CD8-positive, alpha-beta memory T cell (primary cell): ENCODE measurements at regions of chr17 and their contacts with region 1.

Region 1: GRCh38 chr17:75261336-75262111 is at the starts of genes GGA3 and MRPS7:
- DNase-seq: peak; percentile 93 to 97 (median 97)
- H3K4me3 ChIP-seq: peak within 1 kb of the TSS; percentile 94
- H3K4me3 Mint-ChIP-seq: peak within 1 kb of the TSS; percentile 92 to 98 (median 95)
- H3K27ac ChIP-seq: peak within 1 kb of the TSS; percentile 99
- H3K27ac Mint-ChIP-seq: peak within 1 kb of the TSS; percentile 99 to 100 (median 100)
- H3K4me1 ChIP-seq: peaks cover 29% of the 10 kb centered on the region
- H3K4me1 Mint-ChIP-seq: peaks cover 48 to 68% (median 52%) of the 10 kb centered on the region in 3 donors
- H3K27me3 ChIP-seq: no peaks in the 10 kb centered on the region
- H3K27me3 Mint-ChIP-seq: peaks cover 0 to 3% of the 10 kb centered on the region in 2 donors
- total RNA-seq, gene GGA3: 73.2 to 75.1 TPM
- total RNA-seq, gene MRPS7: 101 to 102 TPM

Region 2: DNA sequence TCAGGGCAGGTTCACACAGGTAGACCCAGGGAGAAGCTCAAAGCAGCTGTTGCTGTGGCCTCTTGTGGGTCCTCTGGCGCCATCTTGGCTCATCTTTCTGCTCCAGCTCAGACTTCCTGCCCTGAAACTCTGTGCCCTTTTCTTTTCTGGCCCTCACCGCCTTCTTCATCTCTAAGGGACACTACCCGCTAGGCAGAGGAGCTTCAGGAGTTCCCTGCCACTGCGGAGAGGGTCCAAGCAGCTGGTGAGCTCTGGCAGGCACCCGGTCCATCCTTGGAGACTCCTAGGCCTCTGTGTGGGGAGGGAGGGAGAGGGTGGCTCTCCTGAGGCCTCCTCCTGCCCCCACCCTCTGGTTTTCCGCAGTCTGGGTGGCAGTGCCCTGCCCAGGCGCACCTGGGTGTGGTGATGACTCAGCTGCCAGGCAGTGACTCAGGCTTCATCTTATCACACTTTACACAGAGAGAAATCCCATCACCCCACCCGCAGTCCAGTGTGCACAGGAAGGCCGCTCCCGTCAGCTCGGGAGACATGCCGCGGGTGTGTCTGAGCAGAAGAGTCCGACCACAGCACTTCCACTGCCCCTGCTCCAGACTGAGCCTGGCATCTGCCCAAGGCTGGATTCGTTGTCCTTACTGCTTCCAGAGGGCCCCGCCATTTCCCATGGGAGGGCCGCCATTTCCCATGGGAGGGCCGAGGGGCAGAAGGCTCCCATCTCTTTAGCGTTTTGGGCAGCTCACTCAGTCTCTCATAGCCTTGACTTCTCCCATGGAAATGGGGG is 137.3 kb before region 1 on chr17:
- CTCF ChIA-PET with region 1: no interaction called
- POLR2A ChIA-PET with region 1: no interaction called
- DNase-seq: peak in 2 of 5 donors; percentile 8 to 59
- H3K4me3 ChIP-seq: no peak overlapping the region
- H3K4me3 Mint-ChIP-seq: no peak overlapping the region
- H3K27ac ChIP-seq: peak overlapping the region; percentile 64
- H3K27ac Mint-ChIP-seq: peak overlapping the region in 5 of 8 donors; percentile 11 to 90 (median 39)
- H3K4me1 ChIP-seq: peaks cover 25% of the 10 kb centered on the region
- H3K4me1 Mint-ChIP-seq: peaks cover 23 to 30% (median 28%) of the 10 kb centered on the region in 3 donors
- H3K27me3 ChIP-seq: no peaks in the 10 kb centered on the region
- H3K27me3 Mint-ChIP-seq: no peaks in the 10 kb centered on the region

Region 3: DNA sequence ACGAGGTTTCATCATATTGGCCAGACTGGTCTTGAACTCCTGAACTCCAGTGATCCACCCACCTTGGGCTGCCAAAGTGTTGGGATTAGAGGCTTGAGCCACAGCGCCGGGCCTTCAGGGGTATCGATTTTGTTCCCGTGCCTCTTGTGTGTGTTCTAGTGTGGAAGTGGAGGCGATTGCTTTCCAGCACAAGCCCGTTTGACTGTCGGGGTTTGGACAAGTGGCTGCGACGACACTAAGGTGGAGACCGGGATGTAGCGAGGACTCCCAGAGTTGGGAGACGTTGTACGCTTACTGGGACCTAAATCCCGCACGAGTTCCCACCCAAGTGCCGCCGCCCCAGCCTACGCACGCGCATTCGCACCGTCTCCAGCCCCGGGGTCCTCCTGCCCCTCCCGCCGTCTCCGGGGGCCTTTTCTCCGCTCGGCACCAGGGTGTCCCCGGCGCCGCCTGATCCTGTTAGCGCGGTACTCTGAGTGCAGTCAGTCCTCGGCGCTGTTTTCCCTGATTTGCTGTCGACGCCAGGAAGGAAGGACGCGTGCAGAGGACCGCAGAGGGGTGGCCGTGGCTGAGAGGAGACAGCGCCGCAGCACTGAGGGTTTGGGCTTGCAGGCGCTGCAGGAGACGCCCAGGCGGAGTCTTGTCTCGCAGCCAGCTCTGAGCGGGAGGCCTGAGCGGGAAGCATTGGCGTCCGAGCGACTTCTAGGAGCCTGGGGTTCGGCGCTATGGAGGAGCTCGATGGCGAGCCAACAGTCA is 56.3 kb before region 1 on chr17 and contains the start of gene NUP85:
- CTCF ChIA-PET with region 1: interaction called, 6 read pairs
- POLR2A ChIA-PET with region 1: interaction called, 10 read pairs
- DNase-seq: peak; percentile 88 to 94 (median 91)
- H3K4me3 ChIP-seq: peak within 1 kb of the TSS; percentile 92
- H3K4me3 Mint-ChIP-seq: peak within 1 kb of the TSS; percentile 94 to 98 (median 96)
- H3K27ac ChIP-seq: peak within 1 kb of the TSS; percentile 91
- H3K27ac Mint-ChIP-seq: peak within 1 kb of the TSS; percentile 93 to 99 (median 98)
- H3K4me1 ChIP-seq: peaks cover 8% of the 10 kb centered on the region
- H3K4me1 Mint-ChIP-seq: peaks cover 31 to 42% (median 39%) of the 10 kb centered on the region in 3 donors
- H3K27me3 ChIP-seq: no peaks in the 10 kb centered on the region
- H3K27me3 Mint-ChIP-seq: no peaks in the 10 kb centered on the region
- total RNA-seq, gene NUP85: 147 to 152 TPM

Region 4: GRCh38 chr17:75301502-75302206 is 40.1 kb after region 1 on chr17:
- CTCF ChIA-PET with region 1: no interaction called
- POLR2A ChIA-PET with region 1: no interaction called
- DNase-seq: no peak
- H3K4me3 ChIP-seq: no peak overlapping the region
- H3K4me3 Mint-ChIP-seq: no peak overlapping the region
- H3K27ac ChIP-seq: no peak overlapping the region
- H3K27ac Mint-ChIP-seq: no peak overlapping the region
- H3K4me1 ChIP-seq: no peaks in the 10 kb centered on the region
- H3K4me1 Mint-ChIP-seq: peaks cover 0 to 8% (median 5%) of the 10 kb centered on the region in 3 donors
- H3K27me3 ChIP-seq: no peaks in the 10 kb centered on the region
- H3K27me3 Mint-ChIP-seq: no peaks in the 10 kb centered on the region